ENCODE measurements at regions of chr7 and their contacts with region 1.

Region 1: GRCh38 chr7:12490117-12490688 is 80.3 kb upstream of the SCIN start:
- H3K4me3 Mint-ChIP-seq: no peak overlapping the region
- H3K27ac Mint-ChIP-seq: no peak overlapping the region
- H3K4me1 Mint-ChIP-seq: no peaks in the 10 kb centered on the region
- H3K27me3 Mint-ChIP-seq: no peaks in the 10 kb centered on the region

Region 2: DNA sequence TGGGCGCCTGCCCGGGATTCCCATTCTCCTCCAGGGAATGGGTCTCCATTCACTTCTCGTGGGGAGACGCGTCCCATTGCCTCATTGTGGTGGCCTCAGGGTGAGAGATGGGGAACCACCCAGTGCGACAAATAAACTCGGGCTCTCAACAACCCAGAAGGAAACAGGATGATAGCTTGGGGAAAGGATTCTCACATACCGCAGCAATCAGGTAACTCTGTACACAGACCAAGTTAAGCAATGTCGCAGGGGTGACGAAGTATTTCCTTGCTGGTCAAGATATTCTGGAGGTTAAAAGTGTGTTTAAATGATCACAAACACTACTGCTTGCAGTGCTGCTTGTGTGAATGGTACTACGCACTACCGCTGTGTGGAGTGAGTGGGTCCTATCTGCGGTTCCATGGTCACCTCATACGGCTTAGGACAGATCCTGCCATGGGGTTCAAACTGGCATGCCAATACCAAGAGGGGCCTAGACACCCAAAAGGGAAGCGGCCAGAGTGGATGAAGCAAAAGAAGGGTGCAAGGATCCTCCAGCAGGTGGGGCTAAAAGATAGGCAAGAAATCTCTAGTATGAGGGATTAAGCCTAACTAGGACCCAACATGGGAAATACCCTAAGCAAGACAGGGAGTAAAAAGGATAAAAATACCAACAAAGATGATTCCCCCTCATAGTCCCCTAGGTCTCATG is 422.9 kb before region 1 on chr7:
- intact Hi-C with region 1: loop called (anchors 5 kb)
- H3K4me3 Mint-ChIP-seq: no peak overlapping the region
- H3K27ac Mint-ChIP-seq: peak overlapping the region; percentile 51
- H3K4me1 Mint-ChIP-seq: peaks cover 20% of the 10 kb centered on the region
- H3K27me3 Mint-ChIP-seq: no peaks in the 10 kb centered on the region

Region 3: DNA sequence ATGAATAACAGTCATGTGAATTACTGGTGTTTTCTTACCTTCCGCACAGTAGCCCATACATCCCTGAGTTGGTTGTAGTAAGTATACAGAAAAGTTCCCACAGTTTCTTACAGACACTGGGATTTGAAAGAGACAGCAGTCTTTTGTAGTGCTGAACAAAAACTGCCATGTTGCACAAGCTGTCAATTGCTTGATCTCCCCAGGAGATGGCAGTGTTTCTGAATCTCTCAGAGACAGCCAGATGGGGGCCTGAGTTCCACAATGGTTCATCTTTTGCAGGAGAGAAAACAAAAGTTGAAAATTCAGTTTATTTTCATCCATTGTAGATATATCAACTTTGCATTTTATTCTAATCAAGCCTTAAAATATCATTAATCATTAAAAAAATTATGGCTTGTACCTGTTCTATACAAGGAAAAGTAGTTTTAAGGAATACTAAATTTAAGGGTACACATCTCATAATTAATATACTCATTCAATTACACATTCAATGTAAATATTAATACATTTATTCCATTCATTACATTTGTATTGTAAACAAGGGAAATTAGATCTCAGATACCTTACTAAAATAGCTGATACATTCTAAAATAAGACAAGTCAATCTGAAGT is 101.0 kb before region 1 on chr7:
- intact Hi-C with region 1: loop called (anchors 5 kb)
- H3K4me3 Mint-ChIP-seq: no peak overlapping the region
- H3K27ac Mint-ChIP-seq: no peak overlapping the region
- H3K4me1 Mint-ChIP-seq: peaks cover 3% of the 10 kb centered on the region
- H3K27me3 Mint-ChIP-seq: no peaks in the 10 kb centered on the region

Region 4: DNA sequence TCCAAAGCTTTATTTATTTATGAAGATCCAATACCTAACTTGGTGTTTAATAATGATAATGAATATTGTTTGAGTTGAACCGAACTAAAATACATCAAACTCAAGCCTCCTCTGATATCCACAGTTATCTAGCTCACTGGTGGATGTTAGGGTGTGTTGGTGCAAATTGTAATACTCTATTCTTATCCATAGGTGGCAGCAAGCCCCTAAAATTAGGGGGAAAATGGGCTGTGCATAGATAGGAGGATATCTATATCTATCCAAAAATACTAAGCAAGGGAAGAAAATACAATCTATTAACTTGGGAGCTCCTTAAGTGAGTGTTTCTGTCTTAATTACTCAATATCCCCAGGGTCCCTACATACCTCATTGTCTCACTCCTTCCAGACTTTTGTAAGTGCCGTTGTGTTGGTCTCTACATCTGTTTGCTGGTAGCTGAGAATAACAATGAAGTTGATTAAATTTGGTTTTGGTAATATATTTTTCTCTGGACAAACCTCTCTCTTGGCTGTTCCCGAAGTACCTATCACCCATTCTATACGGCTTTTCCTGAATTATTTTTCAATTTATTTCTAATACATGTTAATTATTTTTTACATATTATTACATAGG is 31.6 kb before region 1 on chr7:
- intact Hi-C with region 1: loop called (anchors 5 kb)
- H3K4me3 Mint-ChIP-seq: no peak overlapping the region
- H3K27ac Mint-ChIP-seq: no peak overlapping the region
- H3K4me1 Mint-ChIP-seq: no peaks in the 10 kb centered on the region
- H3K27me3 Mint-ChIP-seq: no peaks in the 10 kb centered on the region

Measured in dendritic cell treated with granulocyte-macrophage colony-stimulating factor and Interleukin-4, amounts not matched to agents 40 ng/mL and 50 ng/mL, for 4 days (primary cell).